Naive thymus-derived CD4-positive, alpha-beta T cell (primary cell): ENCODE measurements at regions of chr16 and their contacts with region 1.

Region 1: GRCh38 chr16:78122774-78123315 is 23.4 kb downstream of the WWOX start:
- DNase-seq: peak in 6 of 9 donors; percentile 37 to 64 (median 52)
- ATAC-seq: peak; percentile 85
- H3K4me3 ChIP-seq: no peak overlapping the region
- H3K4me3 Mint-ChIP-seq: peak overlapping the region in 1 of 10 donors; percentile 7
- H3K27ac ChIP-seq: no peak overlapping the region
- H3K27ac Mint-ChIP-seq: peak overlapping the region in 1 of 9 donors; percentile 54
- H3K4me1 ChIP-seq: no peaks in the 10 kb centered on the region
- H3K4me1 Mint-ChIP-seq: peaks cover 2 to 6% (median 4%) of the 10 kb centered on the region in 7 donors
- H3K27me3 ChIP-seq: no peaks in the 10 kb centered on the region
- H3K27me3 Mint-ChIP-seq: no peaks in the 10 kb centered on the region

Region 2: GRCh38 chr16:78170436-78170933 is 47.6 kb after region 1 on chr16:
- CTCF ChIA-PET with region 1: no interaction called
- POLR2A ChIA-PET with region 1: no interaction called
- intact Hi-C with region 1: no loop called
- DNase-seq: no peak
- ATAC-seq: no peak
- H3K4me3 ChIP-seq: no peak overlapping the region
- H3K4me3 Mint-ChIP-seq: no peak overlapping the region
- H3K27ac ChIP-seq: no peak overlapping the region
- H3K27ac Mint-ChIP-seq: no peak overlapping the region
- H3K4me1 ChIP-seq: no peaks in the 10 kb centered on the region
- H3K4me1 Mint-ChIP-seq: no peaks in the 10 kb centered on the region
- H3K27me3 ChIP-seq: no peaks in the 10 kb centered on the region
- H3K27me3 Mint-ChIP-seq: no peaks in the 10 kb centered on the region

Region 3: DNA sequence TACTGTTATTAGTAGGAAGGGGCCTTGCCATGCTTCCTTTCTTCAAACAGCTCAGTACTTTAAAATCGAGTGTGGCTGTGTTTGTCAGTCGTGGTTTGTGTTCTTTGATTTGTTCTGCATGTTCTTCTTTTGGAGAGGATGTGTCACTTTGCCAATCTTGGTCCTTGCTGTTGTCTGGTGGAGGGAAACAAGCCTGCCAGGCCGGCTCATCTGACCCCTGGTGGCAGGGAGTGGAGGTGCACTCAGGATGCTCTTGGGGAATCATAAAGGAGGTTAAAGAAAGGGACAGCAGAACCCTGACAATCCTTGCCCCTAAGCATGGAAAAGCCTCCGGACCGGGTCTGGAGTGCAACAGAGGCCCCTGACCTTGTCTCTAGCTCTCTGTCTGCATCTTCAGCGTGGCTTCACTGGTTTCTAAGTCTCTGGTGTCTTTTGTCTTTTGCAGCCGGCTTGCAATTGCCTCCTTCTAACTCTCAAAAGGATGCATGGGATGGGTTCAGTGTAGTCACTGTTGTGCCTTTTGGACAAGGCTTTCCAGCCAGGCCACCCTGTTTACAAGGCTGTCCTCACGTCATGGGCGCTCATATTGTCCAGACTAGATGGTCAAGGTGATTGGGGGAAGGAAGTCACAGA is 112.4 kb after region 1 on chr16:
- CTCF ChIA-PET with region 1: no interaction called
- POLR2A ChIA-PET with region 1: no interaction called
- intact Hi-C with region 1: loop called in 1 of 2 experiments (anchors 1 kb)
- DNase-seq: peak; percentile 18 to 67 (median 49)
- ATAC-seq: peak; percentile 80
- H3K4me3 ChIP-seq: no peak overlapping the region
- H3K4me3 Mint-ChIP-seq: no peak overlapping the region
- H3K27ac ChIP-seq: no peak overlapping the region
- H3K27ac Mint-ChIP-seq: no peak overlapping the region
- H3K4me1 ChIP-seq: no peaks in the 10 kb centered on the region
- H3K4me1 Mint-ChIP-seq: peaks cover 0 to 6% (median 4%) of the 10 kb centered on the region in 7 donors
- H3K27me3 ChIP-seq: no peaks in the 10 kb centered on the region
- H3K27me3 Mint-ChIP-seq: no peaks in the 10 kb centered on the region

Region 4: GRCh38 chr16:78437352-78437968 is 314.6 kb after region 1 on chr16:
- CTCF ChIA-PET with region 1: no interaction called
- POLR2A ChIA-PET with region 1: no interaction called
- intact Hi-C with region 1: loop called (anchors 2 to 10 kb)
- DNase-seq: peak in 5 of 9 donors; percentile 3 to 12 (median 10)
- ATAC-seq: peak; percentile 54
- H3K4me3 ChIP-seq: no peak overlapping the region
- H3K4me3 Mint-ChIP-seq: no peak overlapping the region
- H3K27ac ChIP-seq: no peak overlapping the region
- H3K27ac Mint-ChIP-seq: no peak overlapping the region
- H3K4me1 ChIP-seq: no peaks in the 10 kb centered on the region
- H3K4me1 Mint-ChIP-seq: peaks cover 0 to 2% (median 0%) of the 10 kb centered on the region in 7 donors
- H3K27me3 ChIP-seq: no peaks in the 10 kb centered on the region
- H3K27me3 Mint-ChIP-seq: no peaks in the 10 kb centered on the region

Region 5: DNA sequence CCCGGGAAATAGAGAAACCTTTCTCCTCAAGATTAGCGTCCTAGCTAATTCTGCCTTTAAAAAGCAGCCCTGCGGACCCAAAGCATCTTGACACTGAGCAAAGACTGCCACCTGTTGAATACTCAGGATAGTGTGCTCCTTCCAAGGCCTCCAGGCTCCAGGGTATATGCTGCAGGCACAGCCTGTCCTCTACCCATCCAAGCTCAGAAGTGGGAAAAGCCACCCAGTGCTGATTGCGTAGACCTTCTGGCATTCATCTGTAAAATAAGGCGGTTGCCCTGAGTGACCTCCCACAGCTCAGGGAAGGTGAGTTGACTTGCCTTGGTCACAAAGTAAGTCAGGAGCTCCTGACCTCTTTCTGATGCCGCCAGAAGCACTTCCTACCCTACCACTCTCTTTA is 1961.8 kb after region 1 on chr16:
- CTCF ChIA-PET with region 1: no interaction called
- POLR2A ChIA-PET with region 1: no interaction called
- intact Hi-C with region 1: loop called in 1 of 2 experiments (anchors 5 kb)
- DNase-seq: no peak
- ATAC-seq: no peak
- H3K4me3 ChIP-seq: no peak overlapping the region
- H3K4me3 Mint-ChIP-seq: no peak overlapping the region
- H3K27ac ChIP-seq: no peak overlapping the region
- H3K27ac Mint-ChIP-seq: no peak overlapping the region
- H3K4me1 ChIP-seq: no peaks in the 10 kb centered on the region
- H3K4me1 Mint-ChIP-seq: no peaks in the 10 kb centered on the region
- H3K27me3 ChIP-seq: no peaks in the 10 kb centered on the region
- H3K27me3 Mint-ChIP-seq: peaks cover 0 to 10% (median 0%) of the 10 kb centered on the region in 5 donors